Activated B cell treated with CpG ODN at 0.5 μM for 24 hours (primary cell): ENCODE measurements at regions of chr17 and their contacts with region 1.

Region 1: DNA sequence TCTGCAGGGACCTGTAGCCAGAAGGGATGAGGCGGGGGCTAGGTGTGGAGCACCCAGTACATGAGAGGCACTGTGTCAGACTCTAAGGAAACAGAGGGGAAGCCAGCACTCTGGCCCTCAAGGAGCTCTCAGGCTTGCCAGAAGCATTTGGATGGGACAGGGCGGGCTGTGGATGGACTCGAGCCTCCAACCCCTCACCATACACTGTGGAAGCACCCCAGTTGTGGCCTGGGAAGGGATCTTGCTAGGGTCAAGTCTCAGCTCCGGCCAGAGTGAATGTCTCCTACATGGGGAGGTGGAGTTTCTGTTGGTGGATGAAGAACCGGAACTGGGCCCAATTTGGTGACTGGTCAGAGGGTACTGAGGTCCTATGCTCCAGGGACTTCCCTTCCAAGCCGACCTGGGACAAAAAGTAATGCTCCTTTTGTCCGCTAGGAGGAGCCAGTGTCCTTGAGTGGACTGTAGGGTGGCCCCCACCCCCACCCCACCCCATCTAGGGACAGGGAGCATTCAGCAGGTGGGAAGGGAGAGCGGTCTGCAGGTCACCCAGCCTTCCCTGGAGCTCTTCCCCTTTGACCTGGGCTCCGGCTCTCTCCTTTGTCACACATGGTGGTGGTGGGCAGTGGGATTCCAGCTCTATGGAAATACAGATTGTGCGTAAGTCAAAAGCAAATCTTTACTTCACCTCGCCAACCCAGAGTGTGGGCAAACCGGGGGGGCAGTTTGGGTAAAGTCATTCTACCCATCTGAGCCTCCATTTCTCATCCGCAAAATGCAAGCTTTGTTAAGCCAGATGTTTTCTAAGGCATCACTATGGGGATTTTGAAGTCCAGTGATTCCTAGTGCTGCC is 20.4 kb upstream of the PHB1 start:
- DNase-seq: no peak
- ATAC-seq: peak; percentile 37
- H3K4me3 Mint-ChIP-seq: no peak overlapping the region
- H3K27ac Mint-ChIP-seq: no peak overlapping the region
- H3K4me1 Mint-ChIP-seq: peaks cover 10% of the 10 kb centered on the region
- H3K27me3 Mint-ChIP-seq: peaks cover 7% of the 10 kb centered on the region
- CTCF ChIP-seq: no peak

Region 2: DNA sequence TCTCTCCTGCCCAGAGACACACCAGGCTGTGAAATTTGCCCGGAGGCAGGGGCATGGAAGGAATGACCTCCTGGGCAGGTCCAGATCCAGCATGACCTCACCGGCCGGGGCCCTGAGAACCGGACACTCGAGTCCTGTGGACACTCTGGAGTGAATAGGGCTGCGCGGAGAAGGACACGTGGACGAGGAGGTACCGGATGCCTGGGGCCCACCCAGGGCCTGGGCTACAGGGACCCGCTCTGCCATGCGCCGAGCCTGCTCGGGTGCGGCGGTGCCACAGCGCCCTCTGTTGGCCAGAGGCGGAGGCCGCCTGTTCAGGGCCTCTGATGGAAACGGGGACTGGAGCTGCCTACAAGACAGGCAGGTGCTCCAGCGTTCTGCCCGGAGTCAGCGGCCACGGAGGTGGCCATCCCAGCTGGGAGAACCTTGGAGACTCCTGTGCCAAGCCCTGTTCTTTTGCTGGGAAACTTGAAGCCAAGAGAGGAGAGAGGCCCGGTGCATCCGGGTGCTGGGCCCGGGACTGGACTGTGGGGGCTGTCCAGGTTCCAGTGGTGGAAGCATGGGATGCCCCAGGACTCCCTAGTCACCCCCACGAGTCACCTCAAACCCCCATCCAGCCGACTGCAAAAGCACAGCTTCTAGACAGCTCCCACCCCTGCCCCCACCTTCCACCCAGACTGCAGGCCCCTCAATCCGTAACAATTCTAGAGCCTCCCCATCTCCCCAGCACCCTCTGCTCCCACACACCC is 121.4 kb after region 1 on chr17:
- CTCF ChIA-PET with region 1: interaction called, 22 read pairs
- POLR2A ChIA-PET with region 1: no interaction called
- intact Hi-C with region 1: loop called (anchors 1 kb)
- DNase-seq: peak; percentile 86
- ATAC-seq: peak; percentile 98
- H3K4me3 Mint-ChIP-seq: no peak overlapping the region
- H3K27ac Mint-ChIP-seq: peak overlapping the region; percentile 35
- H3K4me1 Mint-ChIP-seq: no peaks in the 10 kb centered on the region
- H3K27me3 Mint-ChIP-seq: peaks cover 8% of the 10 kb centered on the region
- CTCF ChIP-seq: peak; percentile 40